Mammary epithelial cell (primary cell): ENCODE measurements at regions of chr7 and their contacts with region 1.

Region 1: GRCh38 chr7:65981965-65982792 is at the start of gene GUSB:
- DNase-seq: peak; percentile 81
- H3K4me3 ChIP-seq: peak within 1 kb of the TSS; percentile 74 to 97 (median 86)
- H3K27ac ChIP-seq: peak within 1 kb of the TSS; percentile 47
- H3K4me1 ChIP-seq: peaks cover 6% of the 10 kb centered on the region
- H3K27me3 ChIP-seq: no peaks in the 10 kb centered on the region
- CTCF ChIP-seq: no peak
- total RNA-seq, gene GUSB: 13.3 to 22.4 TPM

Region 2: DNA sequence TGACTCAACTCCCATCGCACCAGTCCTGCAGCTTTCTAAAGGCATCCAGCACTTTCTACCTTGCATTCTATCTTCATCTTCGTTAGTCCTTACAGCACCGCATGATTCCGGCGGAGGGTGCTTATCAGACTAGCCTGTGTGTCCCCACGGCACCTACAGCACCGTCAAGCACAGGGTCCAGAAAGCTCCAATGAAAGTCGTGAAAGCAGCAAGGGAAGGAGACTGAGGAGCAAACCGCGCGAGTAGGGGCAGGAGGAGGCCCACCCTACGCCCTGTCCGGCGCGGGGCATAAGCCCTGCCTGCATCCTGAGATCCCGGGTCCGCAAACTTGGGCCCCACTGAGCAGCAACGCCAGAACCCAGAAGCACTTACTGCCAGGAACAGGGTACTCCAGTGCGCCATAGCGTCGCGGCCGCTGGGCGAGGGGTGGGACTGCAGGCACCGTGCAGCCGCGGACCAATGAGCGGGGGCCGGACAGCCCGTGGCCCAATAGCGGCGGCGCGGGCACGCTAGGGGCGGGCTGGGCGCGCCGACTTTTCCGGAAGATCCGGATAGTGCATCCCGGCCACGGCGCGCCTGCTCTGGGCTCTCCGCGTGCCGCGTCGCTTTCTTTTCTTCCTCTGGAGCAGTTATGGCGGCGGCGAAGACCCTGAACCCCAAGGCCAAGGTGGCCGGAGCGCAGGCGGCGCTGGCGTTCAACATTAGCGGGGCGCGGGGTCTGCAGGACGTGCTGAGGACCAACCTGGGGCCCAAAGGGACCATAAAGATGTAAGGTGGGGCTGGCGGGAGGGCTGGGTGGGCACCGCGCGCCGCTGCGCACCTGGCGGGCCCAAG is 231.5 kb before region 1 on chr7:
- CTCF ChIA-PET with region 1: no interaction called
- dilution Hi-C with region 1: no loop called
- in situ Hi-C with region 1: no loop called
- intact Hi-C with region 1: loop called (anchors 10 kb)
- DNase-seq: peak; percentile 90
- H3K4me3 ChIP-seq: peak overlapping the region; percentile 80 to 99 (median 92)
- H3K27ac ChIP-seq: peak overlapping the region; percentile 85
- H3K4me1 ChIP-seq: peaks cover 9% of the 10 kb centered on the region
- H3K27me3 ChIP-seq: no peaks in the 10 kb centered on the region
- CTCF ChIP-seq: no peak

Region 3: DNA sequence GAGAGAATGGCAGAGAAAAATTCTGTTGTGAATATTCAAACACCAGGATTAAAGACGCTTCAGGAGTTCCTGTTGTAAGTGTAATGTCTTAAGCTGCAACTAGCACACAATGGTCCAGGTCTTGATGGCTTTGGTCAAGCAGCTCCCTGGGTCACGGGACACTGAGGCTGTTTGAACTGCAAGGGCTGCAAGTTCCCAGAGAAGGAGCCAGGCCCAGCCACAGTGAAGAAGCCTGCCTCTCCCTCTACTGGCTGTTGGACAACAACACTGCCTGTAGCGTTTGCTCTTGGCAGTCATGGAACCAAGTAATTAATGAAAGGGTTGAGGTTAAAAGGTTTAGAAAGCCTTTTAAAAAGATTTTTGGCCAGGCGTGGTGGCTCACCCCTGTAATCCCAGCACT is 31.7 kb after region 1 on chr7:
- CTCF ChIA-PET with region 1: interaction called, 11 read pairs
- dilution Hi-C with region 1: no loop called
- in situ Hi-C with region 1: no loop called
- intact Hi-C with region 1: no loop called
- DNase-seq: peak; percentile 26
- H3K4me3 ChIP-seq: no peak overlapping the region
- H3K27ac ChIP-seq: no peak overlapping the region
- H3K4me1 ChIP-seq: peaks cover 7% of the 10 kb centered on the region
- H3K27me3 ChIP-seq: no peaks in the 10 kb centered on the region
- CTCF ChIP-seq: peak; percentile 15 to 20